ENCODE measurements at regions of chr3 and their contacts with region 1.

Region 1: DNA sequence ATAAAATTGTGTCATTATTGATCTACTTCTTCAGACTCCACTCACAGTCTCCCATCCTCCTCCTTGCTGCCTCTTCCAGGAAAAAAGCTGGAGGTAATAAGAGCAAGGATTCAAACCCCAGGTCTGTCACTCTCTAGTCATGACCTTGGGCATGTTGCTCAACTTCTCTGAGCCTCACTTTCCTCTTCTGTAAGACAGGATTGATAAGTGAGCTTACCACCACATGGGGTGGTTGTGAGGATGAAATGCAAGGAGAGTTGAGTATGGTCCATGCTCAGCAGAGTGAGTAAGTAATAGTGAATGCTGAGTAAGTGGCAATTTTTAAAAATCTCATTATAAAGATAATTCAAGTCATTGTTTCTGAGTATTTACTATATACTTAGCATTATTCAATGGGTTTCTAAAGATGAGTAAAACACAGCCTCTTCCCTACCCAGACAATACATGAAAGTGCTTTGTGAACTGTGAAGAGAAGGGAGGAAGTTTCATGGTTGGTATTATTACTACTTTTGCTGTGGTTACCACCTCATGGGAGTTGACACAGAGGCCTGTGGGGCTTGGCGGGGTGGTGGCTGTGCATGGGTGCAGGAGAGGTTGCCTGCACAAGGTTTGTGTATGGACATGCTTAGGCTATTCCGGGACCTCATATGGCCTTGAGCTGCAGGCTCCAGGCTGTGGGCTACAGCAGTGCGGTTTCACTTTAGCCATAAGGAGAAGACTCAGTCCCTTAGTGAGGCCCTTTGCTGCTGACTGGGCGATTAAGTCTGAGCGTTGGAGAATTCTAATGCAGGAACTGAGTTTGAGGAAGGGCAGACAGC is 30.0 kb downstream of the SLC6A11 start:
- DNase-seq: peak in 2 of 3 donors; percentile 8 to 19
- H3K4me3 ChIP-seq: no peak overlapping the region
- H3K27ac ChIP-seq: no peak overlapping the region
- H3K4me1 ChIP-seq: peaks cover 0 to 18% (median 12%) of the 10 kb centered on the region in 4 experiments
- H3K27me3 ChIP-seq: no peaks in the 10 kb centered on the region

Region 2: GRCh38 chr3:10835406-10835805 is 10.6 kb before region 1 on chr3:
- CTCF ChIA-PET with region 1: interaction called, 12 read pairs
- POLR2A ChIA-PET with region 1: no interaction called
- DNase-seq: peak; percentile 5 to 43 (median 32)
- H3K4me3 ChIP-seq: no peak overlapping the region
- H3K27ac ChIP-seq: no peak overlapping the region
- H3K4me1 ChIP-seq: peaks cover 0 to 9% (median 8%) of the 10 kb centered on the region in 4 experiments
- H3K27me3 ChIP-seq: peaks cover 0 to 2% (median 0%) of the 10 kb centered on the region in 5 experiments